ENCODE measurements at regions of chr11 and their contacts with region 1.

Region 1: DNA sequence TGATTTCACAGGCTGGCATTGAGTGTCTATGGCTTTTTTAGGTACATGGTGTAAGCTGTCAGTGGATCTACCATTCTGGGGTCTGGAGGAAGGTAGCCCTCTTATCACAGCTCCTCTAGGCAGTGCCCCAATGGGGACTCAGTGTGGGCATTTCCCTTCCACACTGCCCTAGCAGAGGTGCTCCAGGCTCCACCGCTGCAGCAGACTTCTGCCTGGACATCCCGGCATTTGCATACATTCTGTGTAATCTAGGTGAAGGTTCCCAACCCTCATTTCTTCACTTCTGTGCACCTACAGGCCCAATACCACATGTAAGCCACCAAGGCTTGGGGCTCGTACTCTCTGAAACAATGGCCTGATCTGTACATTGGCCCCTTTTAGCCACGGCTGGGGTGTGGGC is 78.3 kb downstream of the RNF169 start:
- DNase-seq: no peak
- H3K4me3 Mint-ChIP-seq: no peak overlapping the region
- H3K27ac Mint-ChIP-seq: no peak overlapping the region
- H3K4me1 Mint-ChIP-seq: no peaks in the 10 kb centered on the region
- H3K27me3 Mint-ChIP-seq: no peaks in the 10 kb centered on the region

Region 2: DNA sequence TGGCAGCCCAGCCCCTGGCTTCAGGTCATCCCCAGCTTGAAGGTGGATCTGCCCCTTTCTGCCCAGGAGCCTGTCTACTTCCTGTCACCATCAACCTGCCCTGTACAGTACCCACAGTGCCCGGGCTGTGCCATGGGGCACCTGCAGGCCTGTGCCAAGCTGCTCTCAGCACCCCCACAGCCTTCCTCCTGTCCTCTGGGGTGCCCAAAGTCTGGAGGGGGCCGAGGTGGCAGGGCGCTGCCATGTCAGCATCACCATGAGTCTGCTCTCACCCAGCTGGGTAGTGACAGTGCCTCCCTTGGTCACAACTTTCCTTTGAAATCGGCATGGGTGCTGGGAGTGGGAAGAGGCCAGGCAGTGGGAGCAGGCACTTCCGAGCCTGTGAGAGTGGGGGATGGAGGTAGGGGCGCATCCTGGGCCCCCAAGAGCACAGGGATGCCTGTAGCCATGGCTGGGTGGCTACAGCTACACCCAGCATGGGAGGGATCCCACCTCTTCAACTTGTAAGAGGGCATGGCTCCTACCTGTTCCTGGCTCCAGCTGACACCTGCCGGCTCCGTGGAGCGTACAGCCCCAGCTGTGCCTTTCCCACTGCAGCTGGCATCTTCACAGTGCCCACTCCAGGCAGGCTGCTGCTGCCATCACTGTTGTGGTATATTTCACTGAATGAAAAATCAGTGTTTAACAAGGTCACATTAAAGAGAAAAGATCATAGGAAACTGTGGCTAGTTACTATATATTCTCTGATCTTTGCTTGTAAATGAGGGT is 35.4 kb before region 1 on chr11:
- CTCF ChIA-PET with region 1: no interaction called
- POLR2A ChIA-PET with region 1: no interaction called
- intact Hi-C with region 1: no loop called
- DNase-seq: no peak
- H3K4me3 Mint-ChIP-seq: no peak overlapping the region
- H3K27ac Mint-ChIP-seq: no peak overlapping the region
- H3K4me1 Mint-ChIP-seq: no peaks in the 10 kb centered on the region
- H3K27me3 Mint-ChIP-seq: no peaks in the 10 kb centered on the region

Region 3: GRCh38 chr11:74849525-74850391 is 22.9 kb after region 1 on chr11:
- CTCF ChIA-PET with region 1: no interaction called
- POLR2A ChIA-PET with region 1: no interaction called
- intact Hi-C with region 1: no loop called
- DNase-seq: no peak
- H3K4me3 Mint-ChIP-seq: no peak overlapping the region
- H3K27ac Mint-ChIP-seq: no peak overlapping the region
- H3K4me1 Mint-ChIP-seq: peaks cover 8% of the 10 kb centered on the region
- H3K27me3 Mint-ChIP-seq: no peaks in the 10 kb centered on the region

Region 4: GRCh38 chr11:74895340-74896116 is 68.6 kb after region 1 on chr11:
- CTCF ChIA-PET with region 1: no interaction called
- POLR2A ChIA-PET with region 1: no interaction called
- intact Hi-C with region 1: loop called (anchors 2 kb)
- DNase-seq: no peak
- H3K4me3 Mint-ChIP-seq: no peak overlapping the region
- H3K27ac Mint-ChIP-seq: no peak overlapping the region
- H3K4me1 Mint-ChIP-seq: no peaks in the 10 kb centered on the region
- H3K27me3 Mint-ChIP-seq: no peaks in the 10 kb centered on the region